ENCODE measurements at regions of chr19 and their contacts with region 1.

Region 1: DNA sequence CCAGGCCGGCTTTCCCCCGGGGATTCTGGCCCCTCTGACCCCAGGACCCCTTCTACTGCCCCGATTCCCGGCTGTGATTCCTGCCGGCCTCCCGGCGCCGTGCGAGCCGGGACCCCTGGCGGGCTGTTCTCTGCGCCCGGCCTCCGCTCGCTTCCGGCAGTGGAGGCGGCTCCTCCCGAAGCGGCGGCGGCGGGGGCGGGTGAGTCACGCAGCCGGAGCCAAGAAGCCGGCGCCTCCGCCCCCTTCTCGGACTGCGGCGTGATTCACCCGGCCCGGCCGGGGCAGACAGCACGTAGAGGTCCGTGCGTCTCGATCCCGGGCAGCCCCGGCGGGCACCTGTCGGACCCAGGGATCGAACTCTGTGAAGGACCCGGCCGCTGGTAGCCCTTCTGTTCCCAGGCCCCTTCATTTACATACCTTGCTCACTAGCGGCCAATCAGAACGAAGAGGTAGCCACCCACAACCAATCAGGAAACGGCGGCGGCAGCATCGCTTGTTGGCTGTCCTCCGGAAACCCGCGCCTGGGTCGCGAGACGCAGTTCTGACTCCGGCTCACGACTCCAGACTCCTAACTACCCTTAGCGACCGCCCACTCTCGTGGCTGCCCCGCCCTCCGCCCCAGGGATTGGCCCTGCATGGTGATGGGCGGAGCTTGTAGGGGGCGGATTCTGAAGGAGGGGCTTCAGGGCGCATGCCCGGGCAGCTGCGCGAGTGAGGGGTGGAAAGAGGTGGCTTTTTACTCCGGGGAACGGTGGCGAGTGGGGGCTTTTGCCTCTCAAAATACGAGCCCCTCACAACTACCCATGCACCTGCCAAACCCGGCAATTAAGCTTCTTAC is at the start of gene SERTAD1:
- DNase-seq: peak; percentile 99 to 100 (median 100)
- ATAC-seq: peak; percentile 96
- H3K4me3 ChIP-seq: peak within 1 kb of the TSS; percentile 77
- H3K4me3 Mint-ChIP-seq: peak within 1 kb of the TSS; percentile 90 to 99 (median 96)
- H3K27ac ChIP-seq: peak within 1 kb of the TSS; percentile 87
- H3K27ac Mint-ChIP-seq: peak within 1 kb of the TSS; percentile 92 to 100 (median 98)
- H3K4me1 ChIP-seq: peaks cover 15 to 18% of the 10 kb centered on the region in 2 donors
- H3K4me1 Mint-ChIP-seq: peaks cover 12 to 38% (median 24%) of the 10 kb centered on the region in 7 donors
- H3K27me3 ChIP-seq: no peaks in the 10 kb centered on the region
- H3K27me3 Mint-ChIP-seq: peaks cover 0 to 2% (median 0%) of the 10 kb centered on the region in 5 donors
- total RNA-seq, gene SERTAD1: 8.1 to 30.9 (median 13.5) TPM

Region 2: DNA sequence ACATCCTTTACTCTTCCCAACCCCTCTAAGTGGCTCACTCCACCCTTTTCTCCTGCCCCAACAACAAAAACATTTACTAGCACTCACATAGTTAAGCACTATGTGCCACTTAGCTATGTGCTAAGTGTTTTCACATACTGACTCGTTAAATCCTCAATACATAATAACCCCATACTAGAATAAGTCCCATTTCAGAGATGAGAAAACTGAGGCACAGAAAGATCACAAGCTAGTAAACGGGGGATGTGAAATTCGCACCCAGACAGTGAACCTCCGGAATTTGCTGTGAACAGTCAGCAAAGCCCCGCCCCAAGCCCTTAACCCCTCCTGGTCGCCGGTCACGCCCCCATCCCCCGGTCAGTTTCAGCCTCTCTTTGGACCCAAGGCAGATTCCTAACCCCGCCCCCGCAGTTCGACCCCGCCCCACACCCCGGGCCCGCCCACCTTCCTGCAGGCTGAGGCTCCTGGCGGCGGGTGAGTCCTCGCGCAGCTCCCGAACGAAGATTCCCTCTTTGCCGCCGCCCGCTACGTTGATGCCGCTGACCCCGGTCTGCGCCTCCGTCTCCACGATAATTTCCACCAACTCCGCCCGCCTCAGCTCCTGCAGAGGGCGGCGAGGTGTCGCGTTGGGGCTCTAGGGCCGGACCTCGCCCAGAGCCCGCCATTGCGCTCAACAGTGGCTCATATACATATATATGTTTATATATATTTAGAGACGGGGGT is 22.2 kb before region 1 on chr19:
- CTCF ChIA-PET with region 1: interaction called, 5 read pairs
- POLR2A ChIA-PET with region 1: interaction called, 25 read pairs
- intact Hi-C with region 1: loop called (anchors 1 kb)
- DNase-seq: peak; percentile 54 to 84 (median 69)
- ATAC-seq: peak; percentile 80
- H3K4me3 ChIP-seq: peak overlapping the region; percentile 74
- H3K4me3 Mint-ChIP-seq: peak overlapping the region; percentile 78 to 98 (median 93)
- H3K27ac ChIP-seq: peak overlapping the region; percentile 79
- H3K27ac Mint-ChIP-seq: peak overlapping the region; percentile 75 to 93 (median 86)
- H3K4me1 ChIP-seq: peaks cover 5 to 12% of the 10 kb centered on the region in 2 donors
- H3K4me1 Mint-ChIP-seq: peaks cover 22 to 42% (median 36%) of the 10 kb centered on the region in 7 donors
- H3K27me3 ChIP-seq: no peaks in the 10 kb centered on the region
- H3K27me3 Mint-ChIP-seq: peaks cover 0 to 6% (median 0%) of the 10 kb centered on the region in 5 donors

Region 3: DNA sequence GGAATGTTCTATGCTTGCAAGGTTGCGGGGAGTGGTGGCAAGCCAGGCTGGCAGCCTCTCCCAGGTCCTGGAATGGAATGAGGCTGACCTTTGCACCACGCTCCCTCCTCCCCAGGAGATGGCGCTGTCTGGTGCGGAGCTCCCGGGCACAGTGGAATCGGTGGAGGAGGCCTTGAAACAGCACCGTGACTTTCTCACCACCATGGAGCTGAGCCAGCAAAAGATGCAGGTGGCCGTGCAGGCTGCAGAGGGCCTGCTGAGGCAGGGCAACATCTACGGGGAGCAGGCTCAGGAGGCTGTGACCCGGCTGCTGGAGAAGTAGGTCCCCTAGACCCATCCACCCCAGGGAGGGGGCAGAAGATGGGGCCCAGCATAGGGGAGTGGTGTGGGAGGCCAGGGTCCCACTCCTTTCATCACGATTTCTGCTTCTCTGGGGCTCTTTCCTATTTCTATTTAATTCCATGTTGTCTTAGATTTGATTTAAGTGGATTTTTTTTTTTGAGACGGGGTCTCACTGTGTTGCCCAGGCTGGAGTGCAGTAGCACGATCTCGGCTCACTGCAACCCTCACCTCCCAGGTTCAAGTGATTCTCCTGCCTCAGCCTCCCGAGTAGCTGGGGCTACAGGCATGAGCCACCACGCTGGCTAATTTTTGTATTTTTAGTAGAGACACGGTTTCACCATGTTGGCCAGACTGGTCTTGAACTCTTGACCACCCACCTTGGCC is 97.8 kb after region 1 on chr19:
- CTCF ChIA-PET with region 1: no interaction called
- POLR2A ChIA-PET with region 1: no interaction called
- intact Hi-C with region 1: loop called in 1 of 2 experiments (anchors 1 kb)
- DNase-seq: peak in 4 of 9 donors; percentile 19 to 56 (median 26)
- ATAC-seq: peak; percentile 87
- H3K4me3 ChIP-seq: no peak overlapping the region
- H3K4me3 Mint-ChIP-seq: no peak overlapping the region
- H3K27ac ChIP-seq: no peak overlapping the region
- H3K27ac Mint-ChIP-seq: no peak overlapping the region
- H3K4me1 ChIP-seq: no peaks in the 10 kb centered on the region
- H3K4me1 Mint-ChIP-seq: peaks cover 0 to 12% (median 5%) of the 10 kb centered on the region in 7 donors
- H3K27me3 ChIP-seq: no peaks in the 10 kb centered on the region
- H3K27me3 Mint-ChIP-seq: peaks cover 11 to 23% (median 19%) of the 10 kb centered on the region in 5 donors